Activated CD4-positive, alpha-beta T cell treated with anti-CD3 and anti-CD28 coated beads for 36 hours (primary cell): ENCODE measurements at regions of chr12 and their contacts with region 1.

Region 1: GRCh38 chr12:31659087-31659933 is at the start of gene ETFBKMT:
- DNase-seq: peak; percentile 96
- ATAC-seq: peak; percentile 99
- H3K4me3 Mint-ChIP-seq: peak within 1 kb of the TSS; percentile 87
- H3K27ac Mint-ChIP-seq: peak within 1 kb of the TSS; percentile 100
- H3K4me1 Mint-ChIP-seq: peaks cover 13% of the 10 kb centered on the region
- H3K27me3 Mint-ChIP-seq: no peaks in the 10 kb centered on the region
- total RNA-seq, gene ETFBKMT: 0.35 to 1.4 TPM

Region 2: DNA sequence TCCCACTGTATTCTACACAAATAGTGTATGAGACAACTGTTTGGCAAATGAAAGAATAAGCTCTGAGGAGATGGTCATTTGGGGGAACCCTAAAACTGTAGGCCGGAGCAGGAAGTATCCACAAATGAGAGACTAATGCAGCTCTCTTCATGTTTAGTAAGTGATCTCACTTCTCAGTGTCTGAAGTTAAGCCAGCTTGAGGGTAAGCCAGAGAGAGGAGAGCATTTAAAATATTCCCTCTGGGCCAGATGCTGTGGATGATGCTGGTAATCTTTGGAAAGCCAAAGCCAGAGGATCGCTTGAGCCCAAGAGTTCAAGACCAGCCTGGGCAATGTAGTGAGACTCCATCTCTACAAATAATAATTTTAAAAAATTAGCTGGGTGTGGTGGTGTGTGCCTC is 202.7 kb before region 1 on chr12:
- CTCF ChIA-PET with region 1: no interaction called
- POLR2A ChIA-PET with region 1: no interaction called
- intact Hi-C with region 1: no loop called
- DNase-seq: no peak
- ATAC-seq: no peak
- H3K4me3 Mint-ChIP-seq: no peak overlapping the region
- H3K27ac Mint-ChIP-seq: no peak overlapping the region
- H3K4me1 Mint-ChIP-seq: no peaks in the 10 kb centered on the region
- H3K27me3 Mint-ChIP-seq: peaks cover 2% of the 10 kb centered on the region

Region 3: DNA sequence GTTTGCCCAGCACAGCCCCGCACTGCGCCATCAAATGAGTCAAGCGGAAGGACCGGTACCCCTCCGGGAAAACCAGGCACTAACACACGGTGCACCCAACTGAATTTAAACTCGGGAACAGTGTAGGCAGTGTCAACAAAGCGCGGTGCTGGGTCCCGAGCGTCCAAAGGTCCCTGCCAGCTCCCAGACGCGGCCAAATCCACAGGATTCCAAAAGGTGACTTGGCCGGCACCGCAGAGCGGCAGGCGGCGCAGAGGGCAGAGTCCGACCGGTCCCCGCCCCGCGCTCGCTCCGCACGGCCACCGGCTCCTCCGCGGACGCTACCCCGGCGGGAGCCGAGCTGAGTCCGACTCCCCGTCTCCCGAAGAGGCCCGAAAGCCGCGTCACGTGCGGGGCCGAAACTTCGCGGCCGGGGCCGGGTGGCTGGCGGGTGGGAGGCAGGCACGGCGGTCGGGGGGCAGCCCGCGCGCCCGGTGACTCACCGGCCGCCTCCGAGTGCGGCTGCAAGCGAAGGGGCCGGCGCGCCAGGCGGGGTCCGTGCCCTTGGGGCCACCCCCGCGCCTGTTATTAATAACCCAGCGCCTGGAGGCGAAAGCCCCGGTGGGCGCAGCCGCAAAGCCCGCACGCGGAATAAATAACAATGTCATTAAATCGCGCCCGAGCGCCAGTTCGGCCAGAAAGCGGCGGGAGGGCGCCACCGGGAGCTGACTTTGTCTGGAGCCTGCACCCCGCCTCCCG is 69.2 kb before region 1 on chr12:
- CTCF ChIA-PET with region 1: no interaction called
- POLR2A ChIA-PET with region 1: no interaction called
- intact Hi-C with region 1: loop called in 1 of 2 experiments (anchors 2 kb)
- DNase-seq: peak; percentile 43
- ATAC-seq: peak; percentile 42
- H3K4me3 Mint-ChIP-seq: peak overlapping the region; percentile 66
- H3K27ac Mint-ChIP-seq: no peak overlapping the region
- H3K4me1 Mint-ChIP-seq: peaks cover 7% of the 10 kb centered on the region
- H3K27me3 Mint-ChIP-seq: peaks cover 48% of the 10 kb centered on the region

Region 4: DNA sequence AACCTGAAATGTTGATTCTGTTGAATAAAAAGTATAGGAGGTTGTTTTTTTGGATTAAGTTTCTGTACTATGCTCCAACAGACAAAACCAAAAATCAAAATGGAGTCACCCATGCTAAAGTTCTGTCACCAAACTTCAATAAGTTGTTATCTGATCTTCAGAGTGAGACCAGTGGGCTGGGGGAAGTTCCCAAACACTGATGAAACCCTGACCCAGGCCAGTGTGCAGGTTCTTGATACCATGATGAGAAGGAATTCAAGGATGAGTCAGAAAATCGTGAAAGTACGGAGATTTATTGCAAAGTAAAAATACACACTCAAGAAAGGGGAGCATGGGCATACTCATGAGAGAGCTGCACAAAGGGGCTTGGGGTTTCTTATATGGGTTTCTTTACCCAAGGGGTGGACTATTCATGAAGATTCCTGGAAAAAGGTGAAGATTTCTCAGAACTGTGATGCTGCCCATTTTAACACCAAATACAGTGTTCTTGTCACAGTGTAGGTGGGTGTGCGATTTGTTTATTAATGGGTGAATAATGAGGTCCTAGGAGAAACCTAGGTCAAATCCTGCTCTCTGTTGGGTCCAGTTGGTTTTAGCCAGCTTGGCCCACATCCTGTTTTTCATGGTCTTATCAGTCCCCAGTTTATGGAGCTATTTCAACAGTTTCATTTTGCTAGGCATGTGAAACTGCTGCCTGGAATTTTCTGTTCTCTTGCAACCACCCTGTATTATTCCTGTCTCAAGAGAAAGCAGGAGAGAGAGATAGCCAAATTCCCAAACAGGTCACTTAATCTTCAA is 40.9 kb before region 1 on chr12:
- CTCF ChIA-PET with region 1: no interaction called
- POLR2A ChIA-PET with region 1: no interaction called
- intact Hi-C with region 1: no loop called
- DNase-seq: no peak
- ATAC-seq: no peak
- H3K4me3 Mint-ChIP-seq: no peak overlapping the region
- H3K27ac Mint-ChIP-seq: no peak overlapping the region
- H3K4me1 Mint-ChIP-seq: no peaks in the 10 kb centered on the region
- H3K27me3 Mint-ChIP-seq: no peaks in the 10 kb centered on the region

Region 5: GRCh38 chr12:31728917-31729640 is 69.8 kb after region 1 on chr12 and contains the start of gene AMN1:
- CTCF ChIA-PET with region 1: no interaction called
- POLR2A ChIA-PET with region 1: interaction called, 3 read pairs
- intact Hi-C with region 1: loop called (anchors 1 kb)
- DNase-seq: peak; percentile 99
- ATAC-seq: peak; percentile 92
- H3K4me3 Mint-ChIP-seq: peak within 1 kb of the TSS; percentile 89
- H3K27ac Mint-ChIP-seq: peak within 1 kb of the TSS; percentile 99
- H3K4me1 Mint-ChIP-seq: peaks cover 52% of the 10 kb centered on the region
- H3K27me3 Mint-ChIP-seq: no peaks in the 10 kb centered on the region
- total RNA-seq, gene AMN1: 5.1 to 5.8 TPM

Region 6: DNA sequence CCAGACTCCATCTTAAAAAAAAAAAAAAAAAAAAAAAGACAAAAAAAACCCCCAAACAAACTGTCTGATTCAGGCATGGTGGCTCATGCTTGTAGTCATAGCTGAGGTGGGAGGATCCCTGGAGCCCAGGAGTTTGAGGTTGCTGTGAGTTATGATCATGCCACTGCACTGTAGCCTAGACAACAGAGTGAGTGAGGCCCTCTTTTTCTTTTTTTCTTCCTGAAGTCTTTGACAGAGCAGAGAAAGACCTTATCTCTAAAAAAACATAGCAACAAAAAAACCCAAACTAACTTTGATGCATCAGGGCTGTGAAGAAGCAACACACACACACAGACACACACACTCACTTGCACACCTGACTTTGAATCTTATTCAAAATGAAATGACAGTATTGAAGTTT is 77.2 kb after region 1 on chr12:
- CTCF ChIA-PET with region 1: no interaction called
- POLR2A ChIA-PET with region 1: no interaction called
- intact Hi-C with region 1: loop called in 1 of 2 experiments (anchors 1 kb)
- DNase-seq: peak; percentile 82
- ATAC-seq: peak; percentile 82
- H3K4me3 Mint-ChIP-seq: no peak overlapping the region
- H3K27ac Mint-ChIP-seq: peak overlapping the region; percentile 83
- H3K4me1 Mint-ChIP-seq: peaks cover 60% of the 10 kb centered on the region
- H3K27me3 Mint-ChIP-seq: no peaks in the 10 kb centered on the region

Region 7: DNA sequence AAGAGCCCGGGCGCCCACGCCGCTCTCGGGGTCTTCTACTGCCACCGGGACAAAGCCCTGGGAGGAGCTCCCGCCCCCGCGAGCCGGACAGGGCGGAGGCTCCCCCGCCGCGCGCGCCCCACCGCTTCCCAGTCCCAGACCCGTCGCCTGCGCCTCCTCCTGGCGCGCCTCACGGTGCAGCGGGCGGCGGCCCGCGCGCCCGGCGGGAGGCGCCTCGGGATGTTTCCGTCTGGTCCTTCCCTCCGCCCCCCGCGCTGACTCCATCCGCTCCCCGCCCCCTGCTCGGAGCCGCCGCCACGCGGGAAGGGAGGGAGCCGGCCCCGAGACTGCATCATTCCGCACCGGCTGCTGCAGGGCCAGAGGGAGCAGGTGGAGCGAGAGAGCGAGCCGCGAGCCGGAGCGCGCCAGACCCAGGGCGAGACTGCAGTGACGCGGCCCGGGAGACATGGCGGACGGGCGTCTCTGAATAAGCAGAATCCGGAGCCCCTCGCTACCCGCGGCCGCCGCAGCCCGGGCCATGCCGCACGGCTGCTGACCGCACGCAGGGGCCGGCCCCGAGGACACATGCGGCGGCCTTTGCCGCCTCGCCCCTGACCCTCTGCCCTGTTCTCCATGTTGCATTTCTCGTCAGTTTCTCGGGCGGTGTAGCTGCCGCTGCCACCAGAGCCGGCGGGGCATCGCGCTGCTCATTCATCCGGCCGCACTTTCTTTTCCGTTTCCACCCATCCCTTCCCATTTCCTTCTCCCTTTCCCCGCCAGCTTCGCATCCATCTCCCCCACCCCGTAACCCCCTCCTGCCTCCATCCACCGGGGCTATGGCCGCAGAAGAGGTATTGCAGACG is 447.4 kb after region 1 on chr12 and contains the start of gene BICD1:
- CTCF ChIA-PET with region 1: no interaction called
- POLR2A ChIA-PET with region 1: no interaction called
- intact Hi-C with region 1: loop called in 1 of 2 experiments (anchors 1 kb)
- DNase-seq: peak; percentile 86
- ATAC-seq: peak; percentile 83
- H3K4me3 Mint-ChIP-seq: peak within 1 kb of the TSS; percentile 83
- H3K27ac Mint-ChIP-seq: peak within 1 kb of the TSS; percentile 92
- H3K4me1 Mint-ChIP-seq: peaks cover 20% of the 10 kb centered on the region
- H3K27me3 Mint-ChIP-seq: peaks cover 2% of the 10 kb centered on the region
- total RNA-seq, gene BICD1: 12.7 to 15.1 TPM